Mammary epithelial cell (primary cell): ENCODE measurements at regions of chr15 and their contacts with region 1.

Region 1: GRCh38 chr15:40782580-40783227 is 12.9 kb downstream of the C15orf62 start:
- DNase-seq: peak; percentile 67
- H3K4me3 ChIP-seq: no peak overlapping the region
- H3K27ac ChIP-seq: no peak overlapping the region
- H3K4me1 ChIP-seq: peaks cover 25% of the 10 kb centered on the region
- H3K27me3 ChIP-seq: no peaks in the 10 kb centered on the region
- CTCF ChIP-seq: peak; percentile 83 to 93

Region 2: DNA sequence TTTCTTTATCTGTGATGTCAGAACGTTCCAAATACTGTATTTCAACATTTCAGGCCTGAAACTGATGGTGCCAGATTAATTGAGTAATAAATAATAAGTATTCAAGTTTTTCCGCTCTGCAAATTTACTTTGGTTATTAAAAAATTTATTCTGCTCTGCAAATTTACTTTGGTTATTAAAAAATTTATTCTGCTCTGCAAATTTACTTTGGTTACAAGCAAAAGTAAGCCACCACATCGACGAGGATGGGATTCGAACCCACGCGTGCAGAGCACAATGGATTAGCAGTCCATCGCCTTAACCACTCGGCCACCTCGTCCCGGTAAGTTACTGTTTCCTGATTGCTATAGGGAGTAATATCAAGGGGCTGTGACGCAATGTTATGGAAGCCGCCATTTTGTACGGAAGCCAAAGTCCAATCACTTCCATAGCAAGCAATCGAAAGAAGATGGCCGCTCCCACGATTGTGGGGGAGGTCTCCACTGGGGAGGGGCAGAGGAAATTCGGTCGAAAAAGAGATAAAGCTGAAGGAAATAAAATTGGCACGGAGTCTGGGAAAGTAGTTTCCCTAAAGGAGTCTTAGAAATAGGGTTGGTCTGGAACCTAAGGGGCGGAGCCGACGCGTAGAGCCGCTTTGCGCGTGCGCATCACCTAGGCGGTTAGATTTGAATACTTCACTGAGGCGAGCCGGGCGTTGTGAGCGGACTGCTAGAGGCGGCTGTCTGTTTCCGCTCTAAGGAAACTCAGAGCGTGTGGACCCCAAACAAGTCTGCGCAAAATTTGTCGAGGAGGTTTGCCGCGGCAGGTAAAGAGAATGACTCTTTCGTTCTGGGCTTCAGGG is 188.9 kb before region 1 on chr15 and contains the start of gene KNL1:
- CTCF ChIA-PET with region 1: interaction called, 6 read pairs
- dilution Hi-C with region 1: no loop called
- in situ Hi-C with region 1: no loop called
- intact Hi-C with region 1: loop called (anchors 5 kb)
- DNase-seq: peak; percentile 93
- H3K4me3 ChIP-seq: peak within 1 kb of the TSS; percentile 70 to 80 (median 76)
- H3K27ac ChIP-seq: peak within 1 kb of the TSS; percentile 88
- H3K4me1 ChIP-seq: peaks cover 11% of the 10 kb centered on the region
- H3K27me3 ChIP-seq: no peaks in the 10 kb centered on the region
- CTCF ChIP-seq: no peak
- total RNA-seq, gene KNL1: 1.8 to 21.3 TPM

Region 3: GRCh38 chr15:40684381-40684780 is 98.3 kb before region 1 on chr15:
- CTCF ChIA-PET with region 1: no interaction called
- dilution Hi-C with region 1: no loop called
- in situ Hi-C with region 1: no loop called
- intact Hi-C with region 1: loop called (anchors 1 kb)
- DNase-seq: peak; percentile 32
- H3K4me3 ChIP-seq: no peak overlapping the region
- H3K27ac ChIP-seq: no peak overlapping the region
- H3K4me1 ChIP-seq: peaks cover 8% of the 10 kb centered on the region
- H3K27me3 ChIP-seq: no peaks in the 10 kb centered on the region
- CTCF ChIP-seq: no peak

Region 4: GRCh38 chr15:40694688-40695468 is 87.8 kb before region 1 on chr15 and contains the start of gene RAD51:
- CTCF ChIA-PET with region 1: no interaction called
- dilution Hi-C with region 1: no loop called
- in situ Hi-C with region 1: no loop called
- intact Hi-C with region 1: loop called (anchors 5 kb)
- DNase-seq: peak; percentile 95
- H3K4me3 ChIP-seq: peak within 1 kb of the TSS; percentile 66 to 97 (median 75)
- H3K27ac ChIP-seq: peak within 1 kb of the TSS; percentile 91
- H3K4me1 ChIP-seq: peaks cover 8% of the 10 kb centered on the region
- H3K27me3 ChIP-seq: no peaks in the 10 kb centered on the region
- CTCF ChIP-seq: no peak
- total RNA-seq, gene RAD51: 1.5 to 22.6 TPM

Region 5: DNA sequence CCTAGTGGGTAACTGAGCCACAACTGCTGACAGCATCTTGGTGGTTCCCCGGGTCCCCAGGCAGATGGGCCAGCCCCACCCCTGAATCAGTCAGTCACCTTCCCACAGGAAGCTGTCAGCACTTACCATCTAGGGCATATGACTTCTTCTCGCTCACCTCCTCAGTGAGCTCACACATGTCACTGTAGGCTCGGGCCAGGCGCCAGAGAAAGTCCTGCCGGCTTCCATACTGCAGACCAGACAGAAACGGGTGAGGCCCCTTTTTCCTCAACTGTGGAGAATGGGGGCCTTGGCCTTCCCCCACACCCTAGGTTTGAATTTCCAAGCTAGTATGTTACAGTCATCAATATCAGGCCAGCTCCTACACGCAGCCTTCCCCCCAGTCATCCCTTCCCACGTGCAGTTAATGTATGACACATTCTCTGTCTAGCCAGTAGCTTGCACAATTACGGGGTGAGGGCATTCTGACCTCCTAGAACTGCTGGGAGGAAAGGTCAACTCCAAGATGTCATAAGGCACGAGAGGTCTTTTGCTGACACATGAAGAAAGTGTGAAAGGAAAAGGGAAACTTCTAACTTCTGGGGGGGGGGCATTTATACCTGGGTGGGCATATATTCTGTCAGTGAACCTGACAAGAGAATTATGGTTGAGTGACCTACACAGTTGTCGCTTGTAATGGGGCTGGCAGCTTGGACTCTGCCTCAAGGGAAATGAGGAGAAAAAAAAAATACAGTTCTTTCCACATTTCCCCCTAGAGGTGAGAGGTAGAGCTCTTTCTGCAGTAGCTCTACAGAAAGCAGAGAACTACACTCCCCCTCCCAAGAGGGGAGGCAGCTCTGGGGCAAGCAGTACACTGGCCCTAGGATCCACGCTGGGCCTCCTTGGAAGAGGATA is 38.5 kb before region 1 on chr15:
- CTCF ChIA-PET with region 1: interaction called, 15 read pairs
- dilution Hi-C with region 1: no loop called
- in situ Hi-C with region 1: no loop called
- intact Hi-C with region 1: loop called (anchors 1 kb)
- DNase-seq: peak; percentile 78
- H3K4me3 ChIP-seq: no peak overlapping the region
- H3K27ac ChIP-seq: no peak overlapping the region
- H3K4me1 ChIP-seq: peaks cover 10% of the 10 kb centered on the region
- H3K27me3 ChIP-seq: no peaks in the 10 kb centered on the region
- CTCF ChIP-seq: no peak

Region 6: GRCh38 chr15:40807028-40807887 is 24.6 kb after region 1 on chr15 and contains the starts of genes DNAJC17 and ZFYVE19:
- CTCF ChIA-PET with region 1: interaction called, 12 read pairs
- dilution Hi-C with region 1: no loop called
- in situ Hi-C with region 1: no loop called
- intact Hi-C with region 1: loop called (anchors 1 kb)
- DNase-seq: peak; percentile 97
- H3K4me3 ChIP-seq: peak within 1 kb of the TSS; percentile 72 to 92 (median 83)
- H3K27ac ChIP-seq: peak within 1 kb of the TSS; percentile 56
- H3K4me1 ChIP-seq: peaks cover 16% of the 10 kb centered on the region
- H3K27me3 ChIP-seq: no peaks in the 10 kb centered on the region
- CTCF ChIP-seq: peak in 1 of 2 donors; percentile 17
- total RNA-seq, gene DNAJC17: 12.0 to 40.9 TPM
- total RNA-seq, gene ZFYVE19: 20.2 to 21.2 TPM

Region 7: GRCh38 chr15:40852291-40852928 is 69.7 kb after region 1 on chr15:
- CTCF ChIA-PET with region 1: no interaction called
- dilution Hi-C with region 1: no loop called
- in situ Hi-C with region 1: no loop called
- intact Hi-C with region 1: no loop called
- DNase-seq: no peak
- H3K4me3 ChIP-seq: no peak overlapping the region
- H3K27ac ChIP-seq: no peak overlapping the region
- H3K4me1 ChIP-seq: peaks cover 5% of the 10 kb centered on the region
- H3K27me3 ChIP-seq: no peaks in the 10 kb centered on the region
- CTCF ChIP-seq: no peak